ENCODE measurements at regions of chr1 and their contacts with region 1.

Region 1: DNA sequence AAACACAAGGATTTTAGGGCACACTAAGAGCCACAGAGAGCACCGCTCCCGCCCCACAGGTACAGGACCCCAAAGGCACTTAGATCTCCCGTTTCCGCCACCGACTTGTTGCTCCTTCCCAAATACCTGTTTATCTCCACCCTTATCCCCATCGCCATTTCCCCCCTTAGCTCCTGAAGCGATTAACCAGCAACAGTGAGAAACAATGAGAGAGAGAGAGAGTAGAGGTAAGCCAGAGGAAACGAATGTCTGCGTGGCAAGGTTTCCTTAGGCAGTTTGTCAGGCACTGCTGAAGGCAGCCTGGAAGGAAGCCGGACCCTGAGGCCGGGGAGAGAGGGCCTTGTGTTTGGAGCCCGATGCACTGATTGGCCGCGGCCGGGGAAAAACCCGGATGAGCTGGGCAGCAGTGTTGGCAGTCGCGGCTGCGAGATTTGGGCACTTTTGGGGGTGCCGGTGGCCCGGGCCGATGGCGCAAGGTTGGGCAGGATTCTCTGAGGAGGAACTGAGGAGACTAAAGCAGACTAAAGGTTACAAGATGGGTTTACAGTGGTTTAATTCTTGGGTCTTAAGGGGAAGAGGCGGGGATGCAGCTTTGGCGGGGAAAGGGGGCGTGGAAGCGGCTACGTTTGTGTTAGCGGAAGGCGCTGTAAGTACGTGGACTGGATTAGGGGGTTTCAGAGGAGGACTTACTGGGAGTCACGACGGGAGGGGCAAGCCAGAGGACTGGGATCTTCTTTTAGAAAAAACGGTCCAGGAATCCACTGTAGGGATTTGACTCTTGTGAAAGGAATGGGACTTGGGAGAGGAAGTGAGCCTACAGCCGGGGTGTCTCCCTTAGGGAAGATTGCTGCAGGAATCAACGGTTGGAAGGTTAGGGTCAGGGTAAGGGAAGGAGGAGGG is at the start of gene GORAB:
- DNase-seq: peak; percentile 83 to 94 (median 92)
- H3K4me3 ChIP-seq: peak within 1 kb of the TSS; percentile 56 to 92 (median 77)
- H3K27ac ChIP-seq: peak within 1 kb of the TSS; percentile 54 to 94 (median 85)
- H3K27me3 ChIP-seq: no peaks in the 10 kb centered on the region
- CTCF ChIP-seq: peak in 12 of 56 donors; percentile 6 to 29 (median 15)
- total RNA-seq, gene GORAB: 5.4 to 20.8 (median 11.4) TPM

Region 2: DNA sequence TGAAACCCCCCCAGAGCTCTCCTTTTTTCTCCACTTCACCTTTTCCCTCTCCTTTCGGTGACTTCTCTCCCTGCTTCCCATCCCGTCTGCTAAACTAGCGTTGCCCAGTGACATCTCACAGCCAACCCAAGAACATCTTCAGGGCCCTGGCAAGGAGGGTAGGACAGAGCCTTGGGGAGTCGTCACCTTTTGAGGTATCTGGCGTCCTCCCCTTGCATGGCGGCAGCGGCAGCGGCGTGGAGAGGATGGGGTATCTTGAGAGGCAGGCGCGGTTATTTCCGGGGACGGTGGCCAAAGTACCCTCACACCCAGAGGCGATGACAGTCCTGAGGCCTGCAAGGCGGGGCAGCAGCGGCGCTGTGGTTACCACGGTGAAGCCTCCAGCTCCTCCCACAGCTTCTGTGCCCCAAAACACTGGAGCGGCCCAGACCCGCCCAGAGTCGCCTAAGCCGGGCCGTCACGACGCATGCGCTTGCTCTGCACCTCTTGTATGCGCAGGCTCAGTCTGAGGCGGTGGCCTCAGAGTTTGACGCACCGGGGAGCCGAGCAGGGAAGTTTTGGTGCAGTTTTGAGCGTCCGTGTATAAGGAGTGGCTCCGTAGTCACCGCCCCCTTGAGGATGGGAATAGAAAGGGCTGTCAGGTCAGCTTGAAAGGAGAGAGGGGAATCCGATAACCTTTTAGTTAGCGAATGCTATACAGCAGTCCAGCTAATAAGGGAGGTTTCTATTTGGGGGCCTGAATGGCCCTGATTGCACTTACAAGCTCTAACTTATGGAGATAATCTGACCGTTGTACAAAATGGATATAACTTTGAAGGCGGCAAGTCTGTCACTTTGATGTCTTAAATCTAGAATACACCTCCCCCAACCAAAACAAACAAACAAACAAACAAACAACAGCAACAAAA is 457.5 kb before region 1 on chr1 and contains the start of gene KIFAP3:
- intact Hi-C with region 1: loop called in 1 of 2 experiments (anchors 10 kb)
- DNase-seq: peak; percentile 83 to 96 (median 92)
- H3K4me3 ChIP-seq: peak within 1 kb of the TSS; percentile 48 to 92 (median 81)
- H3K27ac ChIP-seq: peak within 1 kb of the TSS; percentile 9 to 91 (median 76)
- H3K27me3 ChIP-seq: no peaks in the 10 kb centered on the region
- CTCF ChIP-seq: peak in 54 of 56 donors; percentile 34 to 78 (median 62)
- total RNA-seq, gene KIFAP3: 57.4 to 189 (median 134) TPM

Region 3: GRCh38 chr1:170664828-170665612 is 133.0 kb after region 1 on chr1:
- intact Hi-C with region 1: loop called in 1 of 2 experiments (anchors 10 kb)
- DNase-seq: peak in 2 of 10 donors; percentile 43 to 66
- H3K4me3 ChIP-seq: peak overlapping the region; percentile 47 to 81 (median 67)
- H3K27ac ChIP-seq: peak overlapping the region in 56 of 59 donors; percentile 46 to 92 (median 77)
- H3K27me3 ChIP-seq: peaks cover 0 to 96% (median 32%) of the 10 kb centered on the region in 45 donors
- CTCF ChIP-seq: peak in 14 of 56 donors; percentile 11 to 33 (median 20)